Head of caudate nucleus (tissue), 42 donors: ENCODE measurements at regions of chr2 and their contacts with region 1.

Region 1: DNA sequence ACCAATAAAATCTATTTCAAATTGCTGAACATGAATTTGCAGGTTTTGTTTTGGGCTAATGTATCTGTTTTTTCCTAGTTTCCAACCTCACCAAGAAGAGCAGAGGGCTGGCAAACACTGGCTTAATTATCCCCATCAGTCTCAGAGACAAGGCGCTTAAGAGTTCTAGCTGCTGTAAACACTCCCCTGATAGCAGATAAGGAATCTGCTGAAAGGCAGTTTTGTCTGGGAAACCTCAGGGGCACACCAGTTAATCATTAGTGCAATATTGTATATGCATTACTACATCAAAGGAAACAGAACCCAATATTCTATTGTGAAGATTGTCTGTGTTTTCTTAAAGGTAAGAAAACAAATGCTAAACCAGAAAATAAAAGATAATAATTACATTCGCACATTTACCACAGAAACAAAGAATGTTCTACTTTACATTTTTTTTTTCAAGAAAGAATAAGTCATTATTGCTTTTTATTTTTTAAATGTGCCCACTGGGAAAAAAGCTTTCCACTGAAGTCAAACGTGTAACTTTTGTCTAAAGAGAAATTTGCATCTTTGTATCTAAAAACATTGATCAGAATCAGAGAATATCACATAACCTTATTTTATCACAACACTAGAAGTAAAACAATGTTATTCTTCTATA is 179.1 kb downstream of the ERBB4 start:
- DNase-seq: peak in 5 of 42 donors; percentile 22 to 50 (median 25)

Region 2: GRCh38 chr2:212536817-212537725 is 177.5 kb after region 1 on chr2:
- intact Hi-C with region 1: loop called (anchors 5 kb)
- DNase-seq: peak in 41 of 42 donors; percentile 6 to 78 (median 51)